MCF 10A (cell line): ENCODE measurements at regions of chr4 and their contacts with region 1.

Region 1: DNA sequence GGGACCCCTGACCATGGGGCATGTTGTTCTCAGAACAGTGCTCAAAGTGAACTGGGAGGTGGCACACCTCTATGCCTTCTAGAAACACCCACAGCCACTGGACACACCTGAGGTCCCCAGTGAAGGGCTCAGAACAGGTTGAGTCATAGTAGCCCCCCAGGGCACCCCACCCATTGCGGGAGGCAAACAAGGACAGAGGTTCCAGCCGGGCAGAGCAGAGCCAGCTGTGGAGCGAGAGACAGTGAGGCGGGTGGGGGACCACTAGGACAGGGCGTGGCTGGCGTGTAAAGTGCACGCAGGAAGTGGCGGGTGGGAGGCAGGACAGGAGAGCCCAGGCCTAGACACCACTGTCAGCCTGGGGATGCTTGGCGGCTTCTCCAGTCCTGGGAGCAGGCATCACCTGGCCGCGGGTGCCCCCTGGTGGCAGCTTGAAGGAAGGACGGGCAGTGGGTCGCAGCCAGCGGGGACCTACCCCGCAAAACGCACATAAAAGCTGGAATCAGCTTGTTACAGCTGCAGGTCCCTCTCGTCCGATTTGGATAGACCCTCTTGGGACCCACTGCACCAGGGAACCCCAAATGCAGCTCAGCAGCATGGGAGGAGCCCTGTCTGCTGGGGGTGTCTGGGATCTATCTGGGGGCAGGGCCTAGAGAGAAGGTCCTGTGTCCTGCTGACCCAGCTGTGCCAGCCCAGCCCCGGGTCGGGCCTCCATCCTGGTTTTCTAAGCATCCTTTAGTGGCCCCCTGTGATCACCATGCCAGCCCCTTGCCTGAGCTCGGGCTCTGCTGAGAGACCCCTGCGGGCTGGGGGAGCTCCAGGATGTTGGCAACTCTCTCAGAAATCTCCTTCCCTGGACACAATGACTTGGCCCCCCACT is 57.6 kb downstream of the WFS1 start:
- DNase-seq: peak; percentile 74
- H3K4me3 Mint-ChIP-seq: no peak overlapping the region
- H3K27ac Mint-ChIP-seq: no peak overlapping the region
- H3K4me1 Mint-ChIP-seq: no peaks in the 10 kb centered on the region
- H3K27me3 Mint-ChIP-seq: no peaks in the 10 kb centered on the region
- CTCF ChIP-seq: peak; percentile 97

Region 2: GRCh38 chr4:5798462-5798861 is 528.8 kb before region 1 on chr4:
- CTCF ChIA-PET with region 1: no interaction called
- POLR2A ChIA-PET with region 1: no interaction called
- intact Hi-C with region 1: no loop called
- DNase-seq: no peak
- H3K4me3 Mint-ChIP-seq: no peak overlapping the region
- H3K27ac Mint-ChIP-seq: no peak overlapping the region
- H3K4me1 Mint-ChIP-seq: no peaks in the 10 kb centered on the region
- H3K27me3 Mint-ChIP-seq: no peaks in the 10 kb centered on the region
- CTCF ChIP-seq: no peak

Region 3: DNA sequence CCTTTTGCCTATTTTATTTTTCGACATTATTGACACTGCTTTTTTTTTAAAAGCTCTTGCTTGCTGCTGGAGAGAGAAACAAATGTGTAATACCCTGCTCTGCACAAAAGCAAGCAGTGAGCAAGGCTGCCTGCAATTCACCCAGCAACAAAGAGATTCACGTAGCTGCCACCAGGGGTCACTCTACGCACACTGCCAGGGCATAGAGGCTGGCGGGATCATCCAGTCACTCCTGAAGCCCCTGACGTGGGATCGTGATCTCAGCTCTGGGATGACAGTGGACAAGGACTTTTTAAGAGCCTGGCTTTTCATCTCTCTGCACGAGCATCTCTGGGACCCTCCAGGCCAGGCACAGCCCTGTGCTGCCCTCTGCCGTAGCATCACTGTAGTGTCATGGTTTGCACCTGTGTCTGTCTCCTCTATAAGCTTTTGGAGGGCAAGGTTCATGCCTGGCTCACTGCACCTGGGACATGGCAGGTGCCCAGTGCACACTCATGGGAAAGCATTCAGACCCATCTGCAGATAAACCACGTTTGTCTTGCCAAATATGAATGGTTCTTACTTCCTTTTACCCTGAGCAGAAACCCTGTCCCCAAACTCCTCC is 328.8 kb before region 1 on chr4:
- CTCF ChIA-PET with region 1: interaction called, 35 read pairs
- POLR2A ChIA-PET with region 1: interaction called, 4 read pairs
- intact Hi-C with region 1: loop called (anchors 1 kb)
- DNase-seq: peak; percentile 70
- H3K4me3 Mint-ChIP-seq: no peak overlapping the region
- H3K27ac Mint-ChIP-seq: no peak overlapping the region
- H3K4me1 Mint-ChIP-seq: no peaks in the 10 kb centered on the region
- H3K27me3 Mint-ChIP-seq: no peaks in the 10 kb centered on the region
- CTCF ChIP-seq: peak; percentile 51

Region 4: DNA sequence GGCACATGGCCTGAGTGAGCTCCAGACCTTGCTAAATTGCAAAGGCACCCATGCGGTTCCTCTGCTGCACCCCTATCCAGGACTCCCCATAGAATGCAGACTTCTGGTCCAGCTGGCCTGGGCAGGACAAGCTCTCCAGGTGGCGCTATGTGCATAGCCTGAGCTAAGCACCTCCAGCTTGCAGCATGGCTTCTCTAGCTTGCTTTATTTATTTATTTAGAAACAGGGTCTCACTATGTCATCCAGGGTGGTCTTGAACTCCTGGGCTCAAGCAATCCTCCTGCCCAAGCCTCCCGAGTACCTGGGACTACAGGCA is 63.1 kb before region 1 on chr4:
- CTCF ChIA-PET with region 1: interaction called, 41 read pairs
- POLR2A ChIA-PET with region 1: interaction called, 3 read pairs
- intact Hi-C with region 1: loop called (anchors 1 kb)
- DNase-seq: peak; percentile 47
- H3K4me3 Mint-ChIP-seq: no peak overlapping the region
- H3K27ac Mint-ChIP-seq: no peak overlapping the region
- H3K4me1 Mint-ChIP-seq: peaks cover 22% of the 10 kb centered on the region
- H3K27me3 Mint-ChIP-seq: peaks cover 17% of the 10 kb centered on the region
- CTCF ChIP-seq: peak; percentile 31

Region 5: GRCh38 chr4:6338175-6338950 is 11.1 kb after region 1 on chr4:
- CTCF ChIA-PET with region 1: interaction called, 51 read pairs
- POLR2A ChIA-PET with region 1: no interaction called
- intact Hi-C with region 1: no loop called
- DNase-seq: no peak
- H3K4me3 Mint-ChIP-seq: no peak overlapping the region
- H3K27ac Mint-ChIP-seq: no peak overlapping the region
- H3K4me1 Mint-ChIP-seq: no peaks in the 10 kb centered on the region
- H3K27me3 Mint-ChIP-seq: peaks cover 11% of the 10 kb centered on the region
- CTCF ChIP-seq: no peak

Region 6: DNA sequence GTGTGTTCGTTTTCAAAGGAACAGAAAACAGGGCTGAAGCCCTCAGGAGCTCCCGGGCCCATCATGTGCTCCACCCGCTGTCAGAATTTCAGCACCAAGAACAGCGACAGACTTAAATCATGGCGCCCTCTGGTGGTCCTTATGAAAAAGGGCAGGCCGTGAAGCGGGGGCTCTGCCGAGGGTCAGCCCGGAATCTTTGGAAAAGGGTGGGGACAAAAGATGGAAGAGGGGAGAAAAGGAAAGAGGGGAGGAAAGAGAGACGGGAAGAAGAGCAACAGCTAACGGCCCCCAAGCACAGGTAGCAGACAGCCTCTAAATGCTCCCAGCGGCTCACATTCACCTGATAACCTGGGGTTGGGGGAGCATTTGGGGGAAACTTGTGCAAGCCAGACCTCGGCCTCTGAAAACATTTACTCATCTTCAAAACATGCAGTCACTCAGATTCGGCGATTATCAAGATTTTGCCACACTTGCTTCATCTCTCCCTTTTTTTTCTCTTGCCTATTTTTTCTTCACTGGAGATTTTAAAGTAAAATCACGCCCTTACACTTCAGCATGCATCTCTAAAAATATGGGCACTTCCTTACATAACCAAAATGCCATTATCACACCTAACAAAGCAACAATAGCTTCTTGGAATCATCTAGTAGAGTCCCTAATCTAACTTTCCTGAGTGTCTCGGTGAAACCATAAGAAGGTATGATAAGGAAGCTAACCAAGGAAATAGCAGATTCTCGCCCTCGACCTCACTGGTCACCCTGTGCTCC is 219.6 kb after region 1 on chr4:
- CTCF ChIA-PET with region 1: interaction called, 54 read pairs
- POLR2A ChIA-PET with region 1: no interaction called
- intact Hi-C with region 1: loop called (anchors 1 kb)
- DNase-seq: peak; percentile 75
- H3K4me3 Mint-ChIP-seq: no peak overlapping the region
- H3K27ac Mint-ChIP-seq: no peak overlapping the region
- H3K4me1 Mint-ChIP-seq: no peaks in the 10 kb centered on the region
- H3K27me3 Mint-ChIP-seq: peaks cover 29% of the 10 kb centered on the region
- CTCF ChIP-seq: peak; percentile 95